Aorta (tissue), 5 donors: ENCODE measurements at regions of chr9 and their contacts with region 1.

Region 1: DNA sequence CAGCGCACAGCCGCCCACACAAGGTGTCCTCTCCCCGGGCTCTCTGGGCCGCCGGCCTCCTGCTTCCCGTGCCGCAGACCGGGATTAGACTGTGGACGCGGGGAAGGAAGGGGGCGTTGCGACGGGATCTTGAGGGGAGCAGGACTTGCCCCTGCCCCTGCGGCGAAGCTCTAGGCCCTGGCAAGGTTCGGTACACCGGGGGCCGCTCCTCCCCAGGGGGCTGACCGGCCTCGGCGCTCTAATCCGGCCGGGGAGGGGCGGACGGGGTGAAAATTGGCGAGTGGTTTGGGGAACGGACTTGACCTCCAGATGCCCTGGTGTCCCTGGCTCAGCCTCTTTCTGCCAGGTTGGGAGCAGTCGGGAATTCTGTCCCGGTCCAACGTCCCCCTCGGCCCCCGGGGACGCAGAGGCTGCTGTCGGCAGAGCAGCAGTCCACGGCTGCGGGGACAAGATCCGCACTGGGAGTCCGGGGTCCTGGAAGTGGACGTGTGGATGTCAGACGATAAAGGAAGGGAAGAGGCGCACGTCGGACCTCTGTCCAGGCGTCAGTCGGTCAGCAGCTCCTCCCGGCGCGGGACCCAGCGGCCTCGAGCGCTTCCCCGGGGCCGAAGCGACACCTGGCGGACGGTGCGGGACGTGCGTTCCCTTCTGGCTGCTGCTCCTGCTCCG is 1.9 kb upstream of the CNTFR start:
- DNase-seq: peak; percentile 90 to 97
- ATAC-seq: peak; percentile 89
- H3K4me3 ChIP-seq: peak overlapping the region in 1 of 2 donors; percentile 19
- H3K27ac ChIP-seq: no peak overlapping the region
- H3K4me1 ChIP-seq: no peaks in the 10 kb centered on the region
- H3K27me3 ChIP-seq: no peaks in the 10 kb centered on the region

Region 2: DNA sequence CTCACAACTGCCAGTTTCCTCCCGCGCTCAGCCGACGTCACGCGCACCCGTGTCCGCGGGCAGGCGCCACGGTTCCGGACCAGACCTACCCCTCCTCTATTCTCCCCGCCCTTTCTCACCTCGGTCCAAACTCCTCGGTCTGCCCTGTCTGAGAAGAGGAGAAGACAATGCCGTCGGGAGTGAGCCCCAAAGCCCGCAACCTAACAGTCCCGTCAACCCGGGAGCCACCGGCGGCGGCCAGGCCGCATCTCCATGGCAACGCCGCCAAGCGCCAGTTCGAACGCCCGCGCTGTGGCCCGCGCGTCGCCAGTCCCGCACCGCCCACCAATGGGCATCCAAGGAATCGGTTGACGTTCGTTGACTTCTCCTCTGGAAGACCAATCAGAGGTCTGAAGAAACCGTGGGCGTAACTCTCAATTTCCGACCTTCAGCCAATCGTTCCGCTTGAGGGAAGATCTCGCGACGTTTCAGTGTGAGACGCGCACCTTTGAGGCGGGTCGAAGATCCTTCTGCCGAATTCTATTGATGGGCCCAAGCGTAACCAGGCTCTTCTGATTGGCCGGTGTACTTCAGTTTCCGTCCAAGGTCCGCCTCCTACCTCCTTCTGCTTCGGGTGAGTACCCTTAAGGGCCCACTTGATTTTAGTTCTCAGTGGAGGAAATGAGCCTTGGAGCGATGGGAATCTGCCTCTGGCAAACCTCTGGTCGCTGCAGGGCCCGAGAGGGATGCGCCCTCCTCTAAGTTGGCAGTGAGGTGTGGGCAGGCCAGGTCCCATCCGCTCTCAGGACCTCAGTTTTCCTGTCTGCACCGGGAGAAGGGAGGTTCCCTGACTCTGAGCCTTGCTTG is 262.2 kb before region 1 on chr9 and contains the starts of genes KIF24 and NUDT2:
- intact Hi-C with region 1: loop called in 1 of 2 experiments (anchors 10 kb)
- DNase-seq: peak; percentile 98
- ATAC-seq: peak; percentile 98
- H3K4me3 ChIP-seq: peak within 1 kb of the TSS; percentile 76 to 84
- H3K27ac ChIP-seq: peak within 1 kb of the TSS in 1 of 2 donors; percentile 93
- H3K4me1 ChIP-seq: no peaks in the 10 kb centered on the region
- H3K27me3 ChIP-seq: no peaks in the 10 kb centered on the region
- total RNA-seq, gene KIF24: 0.32 to 0.78 TPM
- total RNA-seq, gene NUDT2: 13.6 to 17.1 TPM

Region 3: GRCh38 chr9:34403554-34404380 is 187.6 kb before region 1 on chr9:
- intact Hi-C with region 1: loop called in 1 of 2 experiments (anchors 5 kb)
- DNase-seq: peak; percentile 65 to 88
- ATAC-seq: peak; percentile 79
- H3K4me3 ChIP-seq: no peak overlapping the region
- H3K27ac ChIP-seq: no peak overlapping the region
- H3K4me1 ChIP-seq: no peaks in the 10 kb centered on the region
- H3K27me3 ChIP-seq: no peaks in the 10 kb centered on the region

Region 4: DNA sequence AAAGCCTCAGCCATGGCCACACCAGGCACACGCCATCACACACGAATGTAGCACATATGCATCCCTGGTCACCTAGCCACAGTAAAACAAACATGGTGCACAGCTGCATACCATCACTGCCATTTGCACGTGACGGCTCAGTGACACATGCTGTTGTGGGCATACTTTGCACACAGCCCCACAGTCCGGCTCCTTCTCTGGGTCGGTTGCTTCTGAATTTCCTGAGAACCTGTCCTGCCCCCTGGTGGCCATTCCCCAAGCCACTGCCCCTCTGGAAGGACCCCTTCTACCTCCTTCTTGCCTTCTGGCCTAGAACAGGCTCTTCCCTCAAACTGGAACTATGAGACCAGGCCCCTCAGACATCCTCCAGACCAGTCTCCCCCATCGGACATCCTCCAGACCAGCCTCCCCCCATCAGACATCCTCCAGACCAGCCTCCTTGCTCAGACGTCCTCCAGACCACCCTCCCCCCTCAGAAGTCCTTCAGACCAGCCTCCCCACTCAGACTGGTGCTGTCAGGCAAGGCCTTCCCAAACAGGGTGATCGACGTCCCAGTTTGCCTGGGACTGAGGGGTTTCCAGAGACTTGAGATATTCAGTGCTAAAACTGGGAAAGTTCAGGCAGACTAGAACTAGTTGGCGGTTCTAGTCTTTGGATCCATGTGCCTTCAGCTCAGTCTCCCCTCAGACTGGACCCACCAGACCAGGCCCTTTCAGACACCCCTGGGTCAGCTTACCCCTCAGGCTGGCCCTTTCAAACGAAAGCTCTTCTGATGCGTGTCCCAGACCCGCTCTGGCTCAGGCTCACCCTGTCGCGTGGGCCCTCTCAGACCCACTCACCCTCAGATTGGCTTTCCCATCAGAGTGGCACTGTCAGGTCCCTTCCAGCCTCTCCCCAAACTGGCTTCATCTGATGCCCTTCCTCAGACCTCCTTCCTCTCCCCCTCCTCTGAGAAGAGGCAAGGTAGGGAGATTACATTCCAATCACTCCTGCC is 44.3 kb before region 1 on chr9:
- intact Hi-C with region 1: loop called (anchors 2 kb)
- DNase-seq: peak; percentile 61 to 89
- ATAC-seq: peak; percentile 71
- H3K4me3 ChIP-seq: no peak overlapping the region
- H3K27ac ChIP-seq: no peak overlapping the region
- H3K4me1 ChIP-seq: no peaks in the 10 kb centered on the region
- H3K27me3 ChIP-seq: no peaks in the 10 kb centered on the region

Region 5: DNA sequence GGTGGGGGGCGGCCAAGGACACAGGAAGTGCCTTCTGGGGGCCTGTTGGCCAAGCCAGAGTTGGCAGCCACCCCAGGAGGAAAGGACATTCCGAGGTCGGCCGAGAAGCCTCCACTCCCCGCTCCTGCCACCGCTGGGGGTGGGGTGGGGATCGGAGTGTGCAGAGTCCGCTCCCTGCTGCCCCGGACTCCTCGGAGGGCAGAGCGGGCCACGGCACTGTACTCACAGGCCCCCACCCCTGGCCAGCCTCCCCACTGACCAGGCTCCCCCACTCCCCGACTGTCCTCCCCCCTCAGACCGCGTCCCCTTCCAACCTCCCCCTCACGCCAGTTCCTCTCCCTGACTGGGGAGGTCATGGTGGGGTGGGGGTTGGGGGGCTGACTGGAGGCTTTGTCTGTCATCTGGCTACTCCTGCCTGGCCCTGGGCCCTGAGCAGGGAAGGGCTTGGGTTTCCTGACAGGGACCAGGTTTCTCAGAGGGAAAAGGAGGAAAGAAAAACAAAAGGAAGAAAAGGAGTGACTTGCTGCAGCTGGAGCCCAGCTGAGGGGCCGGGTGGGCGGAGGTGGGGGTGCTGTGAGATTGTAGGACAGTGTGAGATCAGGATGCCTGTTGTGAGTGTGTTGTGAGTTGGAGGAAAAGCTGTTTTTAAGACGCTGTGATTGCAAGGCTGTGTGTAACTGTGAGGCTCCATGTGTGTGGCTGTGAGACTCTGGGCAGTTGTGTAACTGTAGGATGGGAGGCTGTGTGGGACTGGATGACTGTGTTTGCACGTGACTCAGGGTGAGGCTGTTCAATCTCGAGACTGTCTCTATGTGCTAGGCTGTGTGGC is 31.5 kb before region 1 on chr9:
- intact Hi-C with region 1: loop called in 1 of 2 experiments (anchors 2 kb)
- DNase-seq: peak; percentile 44 to 75
- ATAC-seq: peak; percentile 75
- H3K4me3 ChIP-seq: no peak overlapping the region
- H3K27ac ChIP-seq: no peak overlapping the region
- H3K4me1 ChIP-seq: no peaks in the 10 kb centered on the region
- H3K27me3 ChIP-seq: no peaks in the 10 kb centered on the region